HEK293 (cell line): ENCODE measurements at regions of chr11 and their contacts with region 1.

Region 1: DNA sequence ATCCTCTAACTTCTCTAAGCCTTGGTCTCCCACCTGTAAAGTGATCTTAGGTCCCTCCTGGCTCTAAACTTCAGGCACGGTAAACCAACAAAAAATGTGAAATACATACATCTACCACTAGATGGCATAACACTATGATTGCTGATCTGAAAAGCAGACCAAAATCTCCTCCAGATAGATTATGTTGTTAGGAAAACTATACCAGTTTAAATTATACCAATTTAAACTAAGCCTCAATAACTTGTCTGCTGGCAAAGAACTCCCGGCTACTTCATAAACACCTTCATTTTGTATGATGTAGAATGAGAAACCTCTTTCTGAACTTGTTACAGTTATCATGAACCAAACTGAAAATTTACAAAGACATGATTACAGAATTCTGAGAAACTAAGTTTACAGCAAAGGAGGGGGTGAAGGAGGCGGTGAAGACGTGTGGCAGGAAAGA is 85.9 kb downstream of the SBF2 start:
- H3K4me3 ChIP-seq: no peak overlapping the region
- H3K27ac ChIP-seq: no peak overlapping the region
- H3K4me1 ChIP-seq: no peaks in the 10 kb centered on the region
- CTCF ChIP-seq: no peak

Region 2: GRCh38 chr11:10076458-10077141 is 131.6 kb before region 1 on chr11:
- CTCF ChIA-PET with region 1: no interaction called
- POLR2A ChIA-PET with region 1: no interaction called
- H3K4me3 ChIP-seq: no peak overlapping the region
- H3K27ac ChIP-seq: no peak overlapping the region
- H3K4me1 ChIP-seq: no peaks in the 10 kb centered on the region
- CTCF ChIP-seq: no peak

Region 3: GRCh38 chr11:10225553-10225952 is 17.4 kb after region 1 on chr11:
- CTCF ChIA-PET with region 1: interaction called, 14 read pairs
- POLR2A ChIA-PET with region 1: interaction called, 5 read pairs
- H3K4me3 ChIP-seq: no peak overlapping the region
- H3K27ac ChIP-seq: no peak overlapping the region
- H3K4me1 ChIP-seq: no peaks in the 10 kb centered on the region
- CTCF ChIP-seq: no peak